Posterior cingulate gyrus (tissue), 11 donors: ENCODE measurements at regions of chr11 and their contacts with region 1.

Region 1: GRCh38 chr11:124953753-124954589 is at the start of gene CCDC15:
- DNase-seq: peak; percentile 95 to 100 (median 99)

Region 2: GRCh38 chr11:124875943-124876817 is 77.8 kb before region 1 on chr11:
- intact Hi-C with region 1: loop called (anchors 5 kb)
- DNase-seq: peak; percentile 71 to 97 (median 82)

Region 3: GRCh38 chr11:125429166-125429707 is 475.3 kb after region 1 on chr11:
- intact Hi-C with region 1: loop called (anchors 10 kb)
- DNase-seq: peak; percentile 59 to 95 (median 80)